GM10248 (cell line): ENCODE measurements at regions of chr14 and their contacts with region 1.

Region 1: GRCh38 chr14:64914237-64914971 is at the start of gene CHURC1:
- DNase-seq: peak; percentile 92
- CTCF ChIP-seq: no peak

Region 2: DNA sequence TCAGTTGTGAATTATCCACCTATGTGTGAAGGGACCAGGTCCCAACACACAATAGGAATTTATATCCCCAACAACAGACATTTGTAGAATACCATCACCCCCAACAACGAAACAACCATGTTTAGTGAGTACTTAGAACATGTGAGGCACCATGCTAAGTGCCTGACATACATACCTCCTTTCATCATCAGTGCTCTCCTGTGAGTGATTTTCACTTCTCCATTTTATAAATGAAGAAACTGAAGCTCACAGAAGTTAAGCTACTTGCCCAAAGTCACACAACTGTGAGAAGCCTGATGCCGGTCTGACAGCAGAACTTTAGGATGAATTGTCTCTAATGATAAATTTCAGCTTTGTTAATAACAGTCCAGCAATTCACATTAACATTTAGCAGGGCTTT is 70.1 kb before region 1 on chr14:
- CTCF ChIA-PET with region 1: no interaction called
- POLR2A ChIA-PET with region 1: no interaction called
- DNase-seq: peak; percentile 53
- CTCF ChIP-seq: no peak

Region 3: GRCh38 chr14:64873506-64874219 is 40.7 kb before region 1 on chr14:
- CTCF ChIA-PET with region 1: no interaction called
- POLR2A ChIA-PET with region 1: no interaction called
- DNase-seq: no peak
- CTCF ChIP-seq: no peak

Region 4: DNA sequence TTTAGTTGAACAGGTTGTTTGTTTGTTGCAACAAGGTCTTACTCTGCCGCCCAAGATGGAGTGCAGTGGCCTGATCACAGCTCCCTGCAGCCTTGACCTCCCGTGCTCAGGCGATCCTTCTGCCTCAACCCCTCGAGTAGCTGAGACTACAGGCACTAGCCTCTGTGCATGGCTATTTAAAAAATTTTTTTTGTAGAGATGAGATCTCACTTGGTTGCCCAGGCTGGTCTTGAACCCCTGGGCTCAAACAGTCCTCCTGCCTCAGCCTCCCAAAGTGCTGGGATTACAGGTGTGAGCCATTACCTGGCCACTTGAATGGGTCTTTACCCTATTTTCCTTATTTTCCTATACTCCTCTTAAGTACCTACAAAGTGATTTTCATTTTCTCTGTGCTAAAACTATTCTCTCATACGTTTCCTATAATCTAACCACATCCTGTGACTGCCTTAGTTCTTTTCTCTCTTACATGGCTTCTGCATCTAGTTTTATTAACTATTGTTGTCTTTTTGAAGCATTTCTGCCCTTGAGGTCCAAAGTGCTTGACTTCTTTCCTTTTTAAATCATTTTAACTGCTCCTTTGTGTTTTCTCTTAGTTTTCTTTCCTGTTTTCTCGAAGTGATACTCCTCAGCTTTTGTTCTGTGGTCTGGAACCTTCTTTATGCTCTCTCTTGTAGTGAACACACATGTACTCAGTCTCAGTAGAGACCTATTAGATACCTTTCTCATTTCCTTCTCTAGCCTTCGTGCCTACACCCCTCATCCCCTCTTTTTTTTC is 14.0 kb after region 1 on chr14:
- CTCF ChIA-PET with region 1: interaction called, 14 read pairs
- POLR2A ChIA-PET with region 1: interaction called, 3 read pairs
- DNase-seq: no peak
- CTCF ChIP-seq: no peak

Region 5: DNA sequence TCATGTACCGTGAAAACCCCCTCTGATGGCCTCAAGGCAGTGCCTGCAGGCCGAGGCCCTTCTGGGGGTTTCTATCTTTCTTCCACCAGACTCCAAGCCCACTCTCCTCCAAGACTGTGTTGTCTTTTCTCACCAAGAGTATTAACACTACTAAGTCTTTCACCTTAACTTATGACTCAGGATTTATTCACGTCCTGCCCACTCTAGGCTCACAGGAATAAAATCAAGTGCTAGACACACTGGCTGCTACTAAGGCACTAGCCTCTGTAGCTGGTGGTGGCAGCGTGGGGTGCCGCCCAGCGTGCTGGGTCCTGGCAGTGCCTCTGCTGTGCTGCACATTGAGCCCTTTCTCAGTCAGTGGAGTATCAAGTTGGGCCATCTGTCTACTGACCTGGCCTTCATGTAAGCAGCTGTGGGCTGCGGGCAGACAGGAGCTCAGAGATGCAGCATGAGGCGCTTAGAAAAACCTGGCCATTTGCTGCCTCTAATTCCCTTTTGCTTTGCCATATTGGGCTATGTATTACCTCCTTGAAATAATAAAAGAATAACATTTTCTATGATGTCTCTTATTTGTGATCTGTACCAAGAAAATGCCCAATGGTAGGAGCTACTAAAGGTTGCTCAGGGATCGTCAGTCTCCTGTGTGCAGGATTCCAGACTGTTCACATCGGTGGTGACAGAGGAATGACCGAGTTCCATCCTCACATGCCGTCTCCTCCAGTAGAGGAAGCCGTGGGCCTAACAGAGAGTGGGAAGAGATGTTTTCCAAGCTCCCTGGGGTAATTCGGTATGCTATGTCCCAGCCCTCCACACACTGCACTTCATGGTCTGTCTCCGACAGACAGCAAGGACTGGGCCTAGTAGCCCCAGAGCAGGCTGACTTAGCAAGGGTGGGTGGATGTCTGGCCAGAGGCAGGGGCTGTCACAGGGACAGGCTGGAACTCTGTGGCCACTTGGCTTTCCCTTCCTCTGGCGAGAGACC is 148.0 kb after region 1 on chr14:
- CTCF ChIA-PET with region 1: no interaction called
- POLR2A ChIA-PET with region 1: no interaction called
- DNase-seq: no peak
- CTCF ChIP-seq: no peak